Activated CD4-positive, alpha-beta T cell treated with anti-CD3 and anti-CD28 coated beads for 36 hours (primary cell): ENCODE measurements at regions of chr19 and their contacts with region 1.

Region 1: DNA sequence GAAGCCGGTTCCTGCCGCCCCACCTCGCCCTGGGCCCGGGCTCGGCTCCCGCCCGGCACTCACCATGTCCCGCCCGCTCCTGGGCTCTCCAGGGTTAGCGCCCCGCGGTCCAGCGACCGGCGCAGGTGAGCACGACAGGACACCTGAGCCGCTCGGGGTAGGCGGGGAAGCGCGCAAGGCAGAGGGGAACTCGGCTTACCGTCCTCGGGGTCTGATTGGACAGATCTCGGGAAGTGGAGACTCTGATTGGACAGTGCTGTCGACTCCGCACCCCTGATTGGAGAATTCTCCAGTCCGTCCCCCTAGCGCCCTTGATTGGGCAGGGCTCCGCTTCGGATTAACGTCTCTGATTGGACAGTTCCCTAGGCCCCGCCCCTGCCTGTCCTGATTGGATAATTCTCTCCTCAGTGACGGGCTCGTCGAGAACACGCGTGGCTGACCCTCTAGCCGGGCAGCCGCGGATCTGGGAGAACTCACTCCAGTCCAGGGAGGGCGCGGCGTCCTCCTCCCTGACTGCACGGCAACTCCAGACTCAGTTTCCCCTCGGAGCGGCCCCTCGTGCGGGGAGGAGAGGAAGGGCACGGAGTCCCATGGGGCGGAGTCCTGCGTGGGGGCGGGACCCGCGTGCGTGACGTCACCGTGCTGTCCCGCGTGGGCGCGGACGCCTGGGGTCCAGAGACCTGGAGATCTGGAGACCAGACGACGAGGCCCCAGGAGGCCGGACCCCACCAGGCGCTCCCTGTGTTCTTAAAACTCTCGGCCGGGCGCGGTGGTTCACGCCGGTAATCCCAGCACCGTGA is at the start of gene ZNF77:
- DNase-seq: peak; percentile 99
- ATAC-seq: peak; percentile 100
- H3K4me3 Mint-ChIP-seq: peak within 1 kb of the TSS; percentile 83
- H3K27ac Mint-ChIP-seq: peak within 1 kb of the TSS; percentile 97
- H3K4me1 Mint-ChIP-seq: peaks cover 34% of the 10 kb centered on the region
- H3K27me3 Mint-ChIP-seq: no peaks in the 10 kb centered on the region
- total RNA-seq, gene ZNF77: 4.3 to 4.8 TPM

Region 2: DNA sequence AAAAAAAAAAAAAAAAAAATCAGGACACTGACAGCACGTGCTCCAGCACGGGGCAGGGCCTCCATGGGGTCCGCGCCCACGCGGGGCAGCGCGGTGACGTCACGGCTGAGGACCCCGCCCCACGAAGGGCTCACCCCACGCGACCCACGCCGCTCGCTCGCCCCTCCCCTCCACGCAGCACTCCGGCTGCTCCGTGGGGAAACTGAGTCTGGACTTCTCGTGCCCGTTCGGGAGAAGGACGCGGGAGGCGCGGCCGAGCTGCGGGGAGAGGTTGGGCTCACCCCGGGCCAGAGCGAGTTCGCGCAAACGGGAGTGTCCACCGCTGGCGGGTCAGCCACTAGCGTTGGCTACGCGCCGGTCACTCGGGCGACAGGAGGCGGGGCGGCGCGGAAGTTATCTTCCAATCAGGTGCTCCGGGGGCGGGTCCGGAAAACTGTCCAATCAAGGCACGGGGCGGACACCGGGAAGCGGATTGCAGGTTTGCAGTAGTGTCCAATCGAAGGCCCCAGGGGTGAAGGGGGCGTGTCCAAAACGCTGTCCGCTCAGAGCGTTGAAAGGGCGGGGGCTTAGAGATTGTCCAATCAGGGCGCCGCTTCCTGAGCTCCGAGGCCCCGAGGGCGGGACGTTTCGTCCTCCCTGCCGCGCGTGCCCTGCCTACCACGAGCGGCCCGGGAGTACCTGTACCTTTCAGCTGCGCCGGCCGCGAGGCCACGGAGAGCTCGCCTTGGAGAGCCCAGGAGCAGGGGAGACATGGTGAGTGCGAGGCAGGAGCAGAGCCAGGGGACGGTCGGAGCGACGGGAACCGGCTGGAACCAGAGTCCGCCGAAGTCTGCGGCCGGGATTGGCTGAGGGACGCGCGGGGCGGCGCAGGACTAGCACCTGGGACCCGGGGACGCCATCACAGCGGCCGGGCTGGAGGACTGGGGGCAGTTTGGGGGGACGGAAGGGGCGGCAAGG is 44.4 kb before region 1 on chr19 and contains the start of gene ZNF57:
- CTCF ChIA-PET with region 1: no interaction called
- POLR2A ChIA-PET with region 1: interaction called, 11 read pairs
- intact Hi-C with region 1: loop called (anchors 1 to 5 kb)
- DNase-seq: peak; percentile 100
- ATAC-seq: peak; percentile 99
- H3K4me3 Mint-ChIP-seq: peak within 1 kb of the TSS; percentile 98
- H3K27ac Mint-ChIP-seq: peak within 1 kb of the TSS; percentile 96
- H3K4me1 Mint-ChIP-seq: peaks cover 18% of the 10 kb centered on the region
- H3K27me3 Mint-ChIP-seq: no peaks in the 10 kb centered on the region
- total RNA-seq, gene ZNF57: 5.9 to 7.1 TPM